CD8-positive, alpha-beta T cell (primary cell): ENCODE measurements at regions of chr17 and their contacts with region 1.

Region 1: DNA sequence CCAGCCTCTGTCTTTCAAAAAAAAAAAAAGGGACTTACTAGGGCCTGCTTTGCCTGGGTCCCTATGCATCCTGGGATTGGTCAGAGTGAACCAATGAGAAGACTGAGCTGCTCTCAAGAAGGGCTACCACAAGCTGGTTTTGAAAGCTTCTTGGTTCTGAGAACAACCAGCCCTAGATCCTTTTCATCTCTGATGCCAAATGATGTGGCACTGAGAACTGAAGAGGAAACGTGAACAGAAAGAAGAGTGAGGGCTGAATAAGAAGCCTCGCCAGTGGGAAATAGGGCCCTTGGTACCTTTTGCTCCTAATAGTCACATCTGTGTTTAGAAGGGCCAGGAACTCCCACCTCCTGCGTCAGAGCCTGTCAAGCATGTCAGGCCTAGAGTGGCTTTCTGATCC is 10.7 kb downstream of the TACO1 start:
- DNase-seq: peak in 1 of 9 experiments; percentile 37
- ATAC-seq: peak; percentile 13
- H3K4me3 ChIP-seq: no peak overlapping the region
- H3K4me3 Mint-ChIP-seq: no peak overlapping the region
- H3K27ac ChIP-seq: peak overlapping the region in 1 of 2 experiments; percentile 39
- H3K27ac Mint-ChIP-seq: peak overlapping the region; percentile 91
- H3K4me1 ChIP-seq: peaks cover 28% of the 10 kb centered on the region
- H3K4me1 Mint-ChIP-seq: peaks cover 31% of the 10 kb centered on the region
- H3K27me3 ChIP-seq: no peaks in the 10 kb centered on the region
- H3K27me3 Mint-ChIP-seq: no peaks in the 10 kb centered on the region
- CTCF ChIP-seq: no peak

Region 2: DNA sequence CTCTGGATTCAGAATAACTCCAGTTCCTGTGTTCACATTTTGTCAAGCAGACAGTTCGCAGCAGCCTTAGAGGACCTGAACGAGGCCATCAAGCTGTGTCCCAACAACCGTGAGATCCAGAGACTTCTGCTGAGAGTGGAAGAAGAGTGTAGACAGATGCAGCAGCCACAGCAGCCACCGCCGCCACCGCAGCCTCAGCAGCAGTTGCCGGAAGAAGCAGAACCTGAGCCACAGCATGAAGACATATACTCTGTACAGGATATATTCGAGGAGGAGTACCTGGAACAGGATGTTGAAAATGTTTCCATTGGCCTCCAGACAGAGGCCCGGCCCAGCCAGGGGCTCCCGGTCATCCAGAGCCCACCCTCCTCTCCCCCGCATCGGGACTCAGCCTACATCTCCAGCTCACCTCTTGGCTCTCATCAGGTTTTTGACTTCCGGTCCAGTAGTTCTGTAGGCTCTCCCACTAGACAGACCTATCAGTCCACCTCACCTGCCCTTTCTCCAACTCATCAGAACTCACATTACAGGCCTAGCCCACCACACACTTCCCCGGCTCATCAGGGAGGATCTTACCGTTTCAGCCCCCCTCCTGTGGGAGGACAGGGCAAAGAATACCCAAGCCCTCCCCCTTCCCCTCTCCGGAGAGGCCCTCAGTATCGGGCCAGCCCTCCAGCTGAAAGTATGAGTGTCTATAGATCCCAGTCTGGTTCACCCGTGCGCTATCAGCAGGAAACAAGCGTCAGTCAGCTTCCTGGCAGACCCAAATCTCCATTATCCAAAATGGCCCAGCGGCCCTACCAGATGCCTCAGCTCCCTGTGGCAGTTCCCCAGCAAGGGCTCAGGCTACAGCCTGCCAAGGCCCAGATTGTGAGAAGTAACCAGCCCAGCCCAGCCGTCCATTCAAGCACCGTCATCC is 191.1 kb before region 1 on chr17:
- CTCF ChIA-PET with region 1: interaction called, 151 read pairs
- POLR2A ChIA-PET with region 1: interaction called, 11 read pairs
- intact Hi-C with region 1: loop called (anchors 1 kb)
- DNase-seq: peak in 7 of 9 experiments; percentile 14 to 66 (median 40)
- ATAC-seq: peak; percentile 85
- H3K4me3 ChIP-seq: no peak overlapping the region
- H3K4me3 Mint-ChIP-seq: peak overlapping the region; percentile 51
- H3K27ac ChIP-seq: no peak overlapping the region
- H3K27ac Mint-ChIP-seq: peak overlapping the region; percentile 79
- H3K4me1 ChIP-seq: peaks cover 14% of the 10 kb centered on the region
- H3K4me1 Mint-ChIP-seq: peaks cover 21% of the 10 kb centered on the region
- H3K27me3 ChIP-seq: no peaks in the 10 kb centered on the region
- H3K27me3 Mint-ChIP-seq: no peaks in the 10 kb centered on the region
- CTCF ChIP-seq: no peak

Region 3: DNA sequence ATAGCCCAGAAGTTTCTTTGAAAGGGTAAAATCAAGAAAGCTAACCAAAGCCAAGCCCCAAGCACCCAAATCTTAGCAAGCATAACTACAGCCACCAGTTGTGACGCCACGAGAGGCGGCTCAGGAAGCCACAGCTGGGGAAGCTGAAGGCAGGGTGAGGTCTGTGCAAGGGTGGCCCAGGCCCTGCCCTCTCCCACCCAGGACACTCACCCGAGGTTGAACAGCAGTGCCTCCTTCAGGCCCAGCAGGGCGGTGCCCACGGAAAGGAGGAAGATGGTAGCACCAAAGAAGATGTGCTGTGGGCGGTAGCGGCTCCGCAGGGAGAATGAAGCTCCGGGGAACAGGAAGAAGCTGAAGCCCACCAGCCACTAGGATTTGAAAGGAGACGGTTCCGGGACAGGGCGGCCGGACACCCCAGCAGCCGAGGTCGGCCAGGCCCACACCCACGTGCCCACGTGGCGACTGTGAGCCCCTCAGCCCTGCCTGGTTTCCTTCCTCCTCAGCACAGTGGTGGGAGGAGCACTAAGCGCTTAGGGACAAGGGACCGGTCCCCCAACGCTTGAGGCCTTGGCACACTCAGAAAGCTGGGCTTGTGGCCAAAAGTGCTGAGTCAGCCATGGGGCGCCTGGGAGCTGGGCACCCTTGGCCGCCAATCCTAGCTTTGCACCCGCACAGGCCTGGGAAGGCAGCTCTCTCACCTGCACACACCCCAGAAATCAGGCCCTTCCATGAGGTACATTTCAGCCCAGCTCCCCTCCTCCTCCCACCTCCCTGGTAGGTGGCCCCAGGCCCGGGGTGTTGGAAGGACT is 176.3 kb before region 1 on chr17:
- CTCF ChIA-PET with region 1: interaction called, 52 read pairs
- POLR2A ChIA-PET with region 1: no interaction called
- intact Hi-C with region 1: no loop called
- DNase-seq: peak; percentile 11 to 84 (median 59)
- ATAC-seq: peak; percentile 96
- H3K4me3 ChIP-seq: no peak overlapping the region
- H3K4me3 Mint-ChIP-seq: peak overlapping the region; percentile 58
- H3K27ac ChIP-seq: peak overlapping the region in 1 of 2 experiments; percentile 60
- H3K27ac Mint-ChIP-seq: peak overlapping the region; percentile 84
- H3K4me1 ChIP-seq: peaks cover 37% of the 10 kb centered on the region
- H3K4me1 Mint-ChIP-seq: peaks cover 34% of the 10 kb centered on the region
- H3K27me3 ChIP-seq: no peaks in the 10 kb centered on the region
- H3K27me3 Mint-ChIP-seq: no peaks in the 10 kb centered on the region
- CTCF ChIP-seq: peak; percentile 31

Region 4: GRCh38 chr17:63478791-63479494 is 132.4 kb before region 1 on chr17:
- CTCF ChIA-PET with region 1: interaction called, 48 read pairs
- POLR2A ChIA-PET with region 1: interaction called, 3 read pairs
- intact Hi-C with region 1: loop called in 1 of 2 experiments (anchors 1 kb)
- DNase-seq: peak; percentile 60 to 84 (median 78)
- ATAC-seq: peak; percentile 81
- H3K4me3 ChIP-seq: no peak overlapping the region
- H3K4me3 Mint-ChIP-seq: peak overlapping the region; percentile 57
- H3K27ac ChIP-seq: no peak overlapping the region
- H3K27ac Mint-ChIP-seq: no peak overlapping the region
- H3K4me1 ChIP-seq: peaks cover 14% of the 10 kb centered on the region
- H3K4me1 Mint-ChIP-seq: peaks cover 11% of the 10 kb centered on the region
- H3K27me3 ChIP-seq: peaks cover 14% of the 10 kb centered on the region in 2 experiments
- H3K27me3 Mint-ChIP-seq: peaks cover 26% of the 10 kb centered on the region
- CTCF ChIP-seq: peak; percentile 61

Region 5: GRCh38 chr17:63486317-63487013 is 124.9 kb before region 1 on chr17:
- CTCF ChIA-PET with region 1: interaction called, 48 read pairs
- POLR2A ChIA-PET with region 1: no interaction called
- intact Hi-C with region 1: no loop called
- DNase-seq: no peak
- ATAC-seq: no peak
- H3K4me3 ChIP-seq: no peak overlapping the region
- H3K4me3 Mint-ChIP-seq: no peak overlapping the region
- H3K27ac ChIP-seq: no peak overlapping the region
- H3K27ac Mint-ChIP-seq: no peak overlapping the region
- H3K4me1 ChIP-seq: no peaks in the 10 kb centered on the region
- H3K4me1 Mint-ChIP-seq: no peaks in the 10 kb centered on the region
- H3K27me3 ChIP-seq: no peaks in the 10 kb centered on the region
- H3K27me3 Mint-ChIP-seq: no peaks in the 10 kb centered on the region
- CTCF ChIP-seq: no peak

Region 6: GRCh38 chr17:63589646-63590045 is 21.7 kb before region 1 on chr17:
- CTCF ChIA-PET with region 1: interaction called, 11 read pairs
- POLR2A ChIA-PET with region 1: no interaction called
- intact Hi-C with region 1: no loop called
- DNase-seq: no peak
- ATAC-seq: no peak
- H3K4me3 ChIP-seq: no peak overlapping the region
- H3K4me3 Mint-ChIP-seq: no peak overlapping the region
- H3K27ac ChIP-seq: no peak overlapping the region
- H3K27ac Mint-ChIP-seq: no peak overlapping the region
- H3K4me1 ChIP-seq: peaks cover 10% of the 10 kb centered on the region
- H3K4me1 Mint-ChIP-seq: peaks cover 16% of the 10 kb centered on the region
- H3K27me3 ChIP-seq: no peaks in the 10 kb centered on the region
- H3K27me3 Mint-ChIP-seq: no peaks in the 10 kb centered on the region
- CTCF ChIP-seq: no peak

Region 7: GRCh38 chr17:63600569-63601438 is 10.6 kb before region 1 on chr17 and contains the start of gene TACO1:
- CTCF ChIA-PET with region 1: interaction called, 11 read pairs
- POLR2A ChIA-PET with region 1: interaction called, 5 read pairs
- intact Hi-C with region 1: no loop called
- DNase-seq: peak; percentile 62 to 87 (median 76)
- ATAC-seq: peak; percentile 82
- H3K4me3 ChIP-seq: peak within 1 kb of the TSS; percentile 69 to 99
- H3K4me3 Mint-ChIP-seq: peak within 1 kb of the TSS; percentile 96
- H3K27ac ChIP-seq: peak within 1 kb of the TSS; percentile 64 to 80
- H3K27ac Mint-ChIP-seq: peak within 1 kb of the TSS; percentile 95
- H3K4me1 ChIP-seq: peaks cover 22% of the 10 kb centered on the region
- H3K4me1 Mint-ChIP-seq: peaks cover 49% of the 10 kb centered on the region
- H3K27me3 ChIP-seq: no peaks in the 10 kb centered on the region
- H3K27me3 Mint-ChIP-seq: no peaks in the 10 kb centered on the region
- CTCF ChIP-seq: no peak
- total RNA-seq, gene TACO1: 13.7 to 15.9 TPM

Region 8: DNA sequence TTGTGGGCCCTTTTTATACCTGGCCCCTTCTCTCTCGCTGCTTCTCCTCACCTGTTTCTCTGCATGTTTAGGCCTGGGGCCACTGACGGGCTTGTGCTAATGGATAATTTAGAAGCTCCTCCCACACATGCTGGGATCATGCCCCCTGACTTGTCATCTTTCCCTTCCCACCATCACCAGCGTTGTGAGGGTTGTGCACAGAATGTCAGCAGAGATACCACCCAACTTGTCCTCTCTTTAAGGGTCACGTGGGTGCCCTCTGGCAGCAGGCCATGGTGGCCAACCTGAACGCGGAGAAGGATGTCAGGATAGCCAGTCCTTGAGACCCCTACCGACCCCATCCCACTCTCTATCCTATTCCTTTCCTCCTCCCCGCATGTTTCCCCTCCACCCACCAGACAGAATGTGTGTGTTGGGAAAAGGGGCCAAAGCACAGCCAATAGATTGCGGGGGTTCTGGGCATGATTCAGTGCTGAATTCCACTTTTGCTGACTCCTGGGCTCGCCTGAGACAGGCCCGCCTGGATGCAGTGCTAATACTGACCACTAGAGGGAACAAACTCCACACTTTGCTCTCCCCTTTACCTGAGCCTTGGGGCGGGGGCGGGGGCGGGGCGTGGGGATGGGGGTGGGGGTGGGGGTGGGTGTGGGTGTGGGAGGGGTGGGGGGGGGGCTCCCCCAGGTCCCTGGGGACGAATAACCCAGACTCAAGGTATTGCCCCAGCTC is 270.7 kb after region 1 on chr17 and contains the start of gene GH2:
- CTCF ChIA-PET with region 1: no interaction called
- POLR2A ChIA-PET with region 1: no interaction called
- intact Hi-C with region 1: no loop called
- DNase-seq: peak; percentile 28 to 76 (median 60)
- ATAC-seq: peak; percentile 99
- H3K4me3 ChIP-seq: no peak within 1 kb of the TSS
- H3K4me3 Mint-ChIP-seq: no peak within 1 kb of the TSS
- H3K27ac ChIP-seq: no peak within 1 kb of the TSS
- H3K27ac Mint-ChIP-seq: no peak within 1 kb of the TSS
- H3K4me1 ChIP-seq: no peaks in the 10 kb centered on the region
- H3K4me1 Mint-ChIP-seq: peaks cover 4% of the 10 kb centered on the region
- H3K27me3 ChIP-seq: no peaks in the 10 kb centered on the region
- H3K27me3 Mint-ChIP-seq: peaks cover 2% of the 10 kb centered on the region
- CTCF ChIP-seq: peak; percentile 63
- total RNA-seq, gene GH2: not detected

Region 9: GRCh38 chr17:65287040-65287439 is 1675.7 kb after region 1 on chr17:
- CTCF ChIA-PET with region 1: no interaction called
- POLR2A ChIA-PET with region 1: no interaction called
- intact Hi-C with region 1: no loop called
- DNase-seq: no peak
- ATAC-seq: no peak
- H3K4me3 ChIP-seq: no peak overlapping the region
- H3K4me3 Mint-ChIP-seq: no peak overlapping the region
- H3K27ac ChIP-seq: no peak overlapping the region
- H3K27ac Mint-ChIP-seq: no peak overlapping the region
- H3K4me1 ChIP-seq: no peaks in the 10 kb centered on the region
- H3K4me1 Mint-ChIP-seq: no peaks in the 10 kb centered on the region
- H3K27me3 ChIP-seq: no peaks in the 10 kb centered on the region
- H3K27me3 Mint-ChIP-seq: peaks cover 3% of the 10 kb centered on the region
- CTCF ChIP-seq: no peak